ENCODE measurements at regions of chrX and their contacts with region 1.

Region 1: GRCh38 chrX:102950908-102951866 is 14.1 kb downstream of the RAB40AL start:
- DNase-seq: peak in 40 of 42 donors; percentile 12 to 90 (median 68)

Region 2: DNA sequence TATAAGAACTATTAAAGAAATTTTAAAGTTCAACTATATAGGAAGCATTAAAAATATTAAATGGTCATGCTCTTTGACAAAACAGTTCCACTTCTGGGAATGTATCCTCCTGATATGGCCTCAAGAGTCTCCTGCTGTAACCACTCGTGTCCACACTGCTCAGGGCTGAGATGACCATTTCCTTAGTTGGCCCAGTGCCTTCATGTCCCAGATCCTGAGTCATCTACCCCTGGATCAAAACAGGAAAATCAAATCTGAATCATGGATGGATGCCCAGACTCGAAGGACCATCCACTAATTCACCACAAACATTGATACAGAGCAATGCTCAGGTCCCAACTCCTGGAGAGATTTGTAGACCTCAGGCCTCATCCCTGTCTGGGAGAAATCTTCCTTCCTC is 186.0 kb before region 1 on chrX:
- intact Hi-C with region 1: no loop called
- DNase-seq: no peak

Region 3: GRCh38 chrX:103157496-103158320 is 206.5 kb after region 1 on chrX:
- intact Hi-C with region 1: loop called (anchors 5 kb)
- DNase-seq: peak in 27 of 42 donors; percentile 5 to 84 (median 43)

Measured in head of caudate nucleus (tissue), 42 donors.